ENCODE measurements at regions of chr22 and their contacts with region 1.

Region 1: GRCh38 chr22:30386960-30387827 is at the start of gene RNF215:
- DNase-seq: peak; percentile 68
- H3K4me3 Mint-ChIP-seq: peak within 1 kb of the TSS; percentile 74
- H3K27ac Mint-ChIP-seq: no peak within 1 kb of the TSS
- H3K4me1 Mint-ChIP-seq: peaks cover 13% of the 10 kb centered on the region
- H3K27me3 Mint-ChIP-seq: no peaks in the 10 kb centered on the region
- total RNA-seq, gene RNF215: 2.8 to 3.9 TPM

Region 2: GRCh38 chr22:30262917-30263741 is 124.1 kb before region 1 on chr22:
- CTCF ChIA-PET with region 1: interaction called, 8 read pairs
- intact Hi-C with region 1: loop called (anchors 1 kb)
- DNase-seq: peak; percentile 87
- H3K4me3 Mint-ChIP-seq: peak overlapping the region; percentile 65
- H3K27ac Mint-ChIP-seq: peak overlapping the region; percentile 43
- H3K4me1 Mint-ChIP-seq: peaks cover 39% of the 10 kb centered on the region
- H3K27me3 Mint-ChIP-seq: no peaks in the 10 kb centered on the region

Region 3: GRCh38 chr22:30406400-30406799 is 19.2 kb after region 1 on chr22:
- CTCF ChIA-PET with region 1: interaction called, 10 read pairs
- intact Hi-C with region 1: no loop called
- DNase-seq: no peak
- H3K4me3 Mint-ChIP-seq: no peak overlapping the region
- H3K27ac Mint-ChIP-seq: no peak overlapping the region
- H3K4me1 Mint-ChIP-seq: peaks cover 6% of the 10 kb centered on the region
- H3K27me3 Mint-ChIP-seq: no peaks in the 10 kb centered on the region

Region 4: DNA sequence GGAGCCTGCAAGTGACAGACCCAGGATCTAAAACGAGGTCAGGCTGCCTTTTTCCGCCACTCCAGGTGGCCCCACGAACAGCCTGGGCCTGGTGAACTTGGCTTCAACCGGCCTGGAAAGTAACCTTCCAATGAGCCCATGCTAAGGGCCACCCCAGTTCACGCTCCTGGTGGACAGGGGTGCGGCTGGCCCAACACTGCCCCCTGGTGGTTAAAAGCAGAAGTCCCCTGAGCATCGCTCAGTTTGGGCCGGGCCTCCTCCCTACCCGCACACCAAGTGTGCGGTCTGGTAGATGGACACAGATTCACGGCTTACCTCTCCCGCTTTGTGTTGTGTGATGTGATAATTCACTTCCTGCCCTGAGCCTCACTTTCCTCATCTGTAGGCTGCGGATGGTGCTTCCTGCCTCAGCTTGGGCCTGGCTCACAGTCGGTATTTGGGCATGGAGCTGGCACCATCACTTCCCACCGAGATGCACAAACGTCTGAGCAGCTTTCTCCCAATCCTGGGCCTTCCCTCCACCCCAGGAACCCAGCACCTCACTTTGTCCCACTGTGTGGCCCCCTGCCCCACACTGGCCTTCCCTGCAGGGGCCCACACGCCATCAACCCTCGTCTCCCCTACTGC is 98.3 kb after region 1 on chr22:
- CTCF ChIA-PET with region 1: interaction called, 73 read pairs
- intact Hi-C with region 1: loop called (anchors 1 kb)
- DNase-seq: peak; percentile 81
- H3K4me3 Mint-ChIP-seq: no peak overlapping the region
- H3K27ac Mint-ChIP-seq: no peak overlapping the region
- H3K4me1 Mint-ChIP-seq: no peaks in the 10 kb centered on the region
- H3K27me3 Mint-ChIP-seq: no peaks in the 10 kb centered on the region

Region 5: GRCh38 chr22:30503551-30503950 is 116.4 kb after region 1 on chr22:
- CTCF ChIA-PET with region 1: no interaction called
- intact Hi-C with region 1: no loop called
- DNase-seq: no peak
- H3K4me3 Mint-ChIP-seq: no peak overlapping the region
- H3K27ac Mint-ChIP-seq: no peak overlapping the region
- H3K4me1 Mint-ChIP-seq: no peaks in the 10 kb centered on the region
- H3K27me3 Mint-ChIP-seq: peaks cover 18% of the 10 kb centered on the region

Region 6: GRCh38 chr22:30556388-30556787 is 169.2 kb after region 1 on chr22:
- CTCF ChIA-PET with region 1: no interaction called
- intact Hi-C with region 1: no loop called
- DNase-seq: no peak
- H3K4me3 Mint-ChIP-seq: no peak overlapping the region
- H3K27ac Mint-ChIP-seq: no peak overlapping the region
- H3K4me1 Mint-ChIP-seq: no peaks in the 10 kb centered on the region
- H3K27me3 Mint-ChIP-seq: no peaks in the 10 kb centered on the region